ENCODE measurements at regions of chr5 and their contacts with region 1.

Region 1: GRCh38 chr5:38441453-38442246 is 114.8 kb downstream of the LIFR start:
- DNase-seq: peak; percentile 90
- ATAC-seq: peak; percentile 99
- H3K4me3 Mint-ChIP-seq: no peak overlapping the region
- H3K27ac Mint-ChIP-seq: no peak overlapping the region
- H3K4me1 Mint-ChIP-seq: no peaks in the 10 kb centered on the region
- H3K27me3 Mint-ChIP-seq: peaks cover 25% of the 10 kb centered on the region

Region 2: DNA sequence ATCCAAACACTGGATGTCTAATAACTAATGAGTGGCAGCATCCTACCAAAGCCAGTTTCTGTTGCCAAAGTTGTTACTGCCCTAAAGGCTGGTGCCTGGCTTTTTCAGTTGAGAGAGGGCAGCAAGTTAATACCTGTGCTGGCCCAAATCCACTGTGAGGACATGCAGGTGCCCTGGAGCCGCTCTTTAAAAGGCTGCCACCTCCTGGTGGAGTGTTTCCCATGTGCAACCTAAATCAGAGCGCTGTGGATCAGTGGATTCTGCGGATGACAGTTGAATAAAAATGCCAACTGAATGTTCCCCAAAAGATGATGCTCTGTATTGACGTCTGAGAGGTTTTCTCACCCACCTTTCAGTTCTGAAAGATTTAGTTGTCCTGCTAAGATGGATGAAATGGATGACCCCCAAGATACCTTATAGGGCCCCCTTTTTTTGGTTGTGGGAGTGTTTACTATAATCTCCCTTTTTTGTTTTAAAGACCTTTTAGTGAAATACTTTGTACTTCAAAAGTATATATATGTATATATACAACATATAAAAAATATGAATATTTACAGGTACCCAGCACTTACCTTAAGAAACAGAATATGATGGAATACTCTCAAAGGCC is 36.9 kb before region 1 on chr5:
- CTCF ChIA-PET with region 1: no interaction called
- POLR2A ChIA-PET with region 1: no interaction called
- intact Hi-C with region 1: no loop called
- DNase-seq: peak; percentile 29
- ATAC-seq: no peak
- H3K4me3 Mint-ChIP-seq: no peak overlapping the region
- H3K27ac Mint-ChIP-seq: no peak overlapping the region
- H3K4me1 Mint-ChIP-seq: no peaks in the 10 kb centered on the region
- H3K27me3 Mint-ChIP-seq: peaks cover 30% of the 10 kb centered on the region

Region 3: DNA sequence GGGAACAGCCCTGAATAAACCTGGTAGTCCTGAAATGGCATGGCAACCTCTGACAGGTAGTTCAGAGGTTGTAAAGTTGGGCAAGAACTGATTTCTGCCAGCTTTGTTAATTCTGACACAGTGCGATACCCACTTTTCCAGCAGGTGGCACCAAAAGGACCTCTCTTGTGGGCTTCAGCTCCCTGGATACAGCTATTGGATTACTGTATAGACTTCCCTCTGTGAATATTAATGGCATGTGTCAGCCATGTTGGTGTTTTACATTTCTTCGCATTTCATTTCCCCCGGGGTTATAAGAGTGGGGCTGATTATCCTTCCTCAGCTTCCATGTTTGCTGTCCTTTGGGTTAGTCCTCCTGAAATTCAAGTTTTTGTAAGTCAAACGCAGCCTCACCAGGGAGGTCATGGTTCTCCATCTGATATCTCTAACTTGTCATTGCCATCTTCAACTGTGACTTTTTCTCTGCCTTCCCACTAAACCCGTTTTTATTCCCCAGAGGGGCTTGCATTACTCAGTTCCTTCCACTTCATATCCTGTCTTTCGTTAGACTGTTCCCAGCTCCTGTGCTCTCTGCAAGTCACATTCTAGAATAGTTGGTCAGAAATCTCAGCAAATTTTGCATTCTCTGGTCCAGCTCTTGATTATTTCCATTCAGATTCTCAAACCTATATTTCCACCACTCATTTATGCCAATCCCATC is 20.8 kb before region 1 on chr5:
- CTCF ChIA-PET with region 1: interaction called, 26 read pairs
- POLR2A ChIA-PET with region 1: no interaction called
- intact Hi-C with region 1: no loop called
- DNase-seq: peak; percentile 54
- ATAC-seq: peak; percentile 42
- H3K4me3 Mint-ChIP-seq: no peak overlapping the region
- H3K27ac Mint-ChIP-seq: no peak overlapping the region
- H3K4me1 Mint-ChIP-seq: no peaks in the 10 kb centered on the region
- H3K27me3 Mint-ChIP-seq: peaks cover 22% of the 10 kb centered on the region

Region 4: DNA sequence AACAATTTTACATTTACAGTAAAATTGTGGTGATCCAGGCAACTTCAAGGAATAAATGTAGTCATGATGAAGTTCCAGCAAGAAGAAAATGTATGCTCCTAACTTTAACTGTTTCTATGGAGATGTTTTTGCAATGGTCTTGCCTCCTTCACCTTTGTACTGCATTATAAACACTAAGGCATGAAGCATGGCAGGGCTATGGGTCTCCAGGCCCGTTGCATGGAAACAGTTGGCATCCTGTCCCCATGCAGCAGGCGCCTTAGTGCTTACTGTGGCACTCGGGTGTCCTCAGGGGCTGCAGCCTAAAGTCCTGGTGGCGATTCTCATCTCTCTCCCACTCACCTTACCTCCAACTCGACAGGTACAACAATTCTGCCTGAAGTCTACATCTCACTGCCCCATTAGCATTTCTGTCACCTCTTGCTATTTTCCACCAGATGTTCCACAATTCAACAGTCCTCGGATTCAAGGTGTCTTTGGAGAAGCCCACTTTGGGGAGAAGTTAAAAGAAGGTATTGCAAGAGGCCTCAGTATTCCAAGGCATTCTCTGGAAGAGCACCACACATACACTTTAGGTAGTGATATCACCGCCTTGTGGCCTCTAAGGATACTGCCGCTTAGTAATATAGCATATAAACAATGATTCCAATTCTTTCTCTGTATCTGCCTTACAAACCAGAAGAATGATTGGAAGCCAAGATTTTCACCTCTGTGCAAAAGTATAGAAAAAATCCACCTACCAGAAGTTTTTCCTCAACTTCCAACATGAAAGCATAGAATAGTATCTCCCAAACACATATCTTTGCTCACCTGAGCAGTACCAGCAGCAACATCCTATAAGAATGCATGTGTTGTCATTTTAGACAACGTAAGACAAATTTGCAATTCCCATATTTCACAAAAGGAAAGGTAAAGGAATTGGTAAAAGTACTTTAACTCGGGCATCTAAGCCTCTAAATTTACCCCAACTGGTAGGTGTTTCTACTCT is 109.7 kb after region 1 on chr5:
- CTCF ChIA-PET with region 1: interaction called, 7 read pairs
- POLR2A ChIA-PET with region 1: no interaction called
- intact Hi-C with region 1: loop called (anchors 1 kb)
- DNase-seq: peak; percentile 12
- ATAC-seq: peak; percentile 37
- H3K4me3 Mint-ChIP-seq: no peak overlapping the region
- H3K27ac Mint-ChIP-seq: no peak overlapping the region
- H3K4me1 Mint-ChIP-seq: peaks cover 7% of the 10 kb centered on the region
- H3K27me3 Mint-ChIP-seq: peaks cover 35% of the 10 kb centered on the region

Region 5: DNA sequence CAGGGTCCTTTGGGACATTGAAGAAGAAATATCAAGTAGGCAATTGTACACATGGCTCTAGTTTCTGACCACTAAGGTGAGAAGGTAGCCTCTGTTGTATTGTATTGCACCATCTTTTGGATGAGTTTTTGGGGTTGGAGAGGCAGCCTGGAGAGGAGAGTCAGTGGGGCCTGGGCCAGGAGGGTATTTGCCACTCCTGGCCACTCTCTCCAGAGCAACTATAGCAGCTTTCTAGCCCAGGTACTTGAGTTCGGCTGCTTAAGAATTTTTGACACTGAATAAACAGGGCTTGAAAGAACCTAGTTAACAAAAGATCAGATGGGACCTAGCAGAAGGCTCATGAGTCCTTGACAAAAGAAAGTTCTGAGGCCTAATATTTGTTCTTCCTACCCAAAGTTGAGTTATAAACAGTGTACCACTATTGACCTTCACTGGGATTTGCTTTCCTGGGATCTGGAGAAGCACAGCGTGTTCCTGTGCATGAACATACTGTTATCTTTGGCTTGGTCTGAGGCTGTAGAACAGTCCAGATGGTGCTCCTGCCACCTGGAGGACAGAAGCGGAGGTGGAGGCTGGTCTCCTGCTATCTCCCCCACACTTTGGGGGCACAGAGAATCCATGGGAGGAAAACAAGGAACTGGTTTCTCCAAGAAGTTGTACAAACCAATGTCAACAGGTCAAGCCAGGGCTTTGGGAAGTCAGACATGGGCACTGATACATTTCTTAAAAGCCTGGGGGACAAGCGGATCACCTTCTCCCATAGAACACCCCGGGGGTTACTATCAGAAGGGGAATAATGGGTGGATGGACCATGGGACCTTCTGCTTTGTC is 225.2 kb after region 1 on chr5:
- CTCF ChIA-PET with region 1: interaction called, 5 read pairs
- POLR2A ChIA-PET with region 1: no interaction called
- intact Hi-C with region 1: loop called (anchors 1 to 2 kb)
- DNase-seq: peak; percentile 12
- ATAC-seq: no peak
- H3K4me3 Mint-ChIP-seq: no peak overlapping the region
- H3K27ac Mint-ChIP-seq: no peak overlapping the region
- H3K4me1 Mint-ChIP-seq: no peaks in the 10 kb centered on the region
- H3K27me3 Mint-ChIP-seq: peaks cover 18% of the 10 kb centered on the region

Region 6: DNA sequence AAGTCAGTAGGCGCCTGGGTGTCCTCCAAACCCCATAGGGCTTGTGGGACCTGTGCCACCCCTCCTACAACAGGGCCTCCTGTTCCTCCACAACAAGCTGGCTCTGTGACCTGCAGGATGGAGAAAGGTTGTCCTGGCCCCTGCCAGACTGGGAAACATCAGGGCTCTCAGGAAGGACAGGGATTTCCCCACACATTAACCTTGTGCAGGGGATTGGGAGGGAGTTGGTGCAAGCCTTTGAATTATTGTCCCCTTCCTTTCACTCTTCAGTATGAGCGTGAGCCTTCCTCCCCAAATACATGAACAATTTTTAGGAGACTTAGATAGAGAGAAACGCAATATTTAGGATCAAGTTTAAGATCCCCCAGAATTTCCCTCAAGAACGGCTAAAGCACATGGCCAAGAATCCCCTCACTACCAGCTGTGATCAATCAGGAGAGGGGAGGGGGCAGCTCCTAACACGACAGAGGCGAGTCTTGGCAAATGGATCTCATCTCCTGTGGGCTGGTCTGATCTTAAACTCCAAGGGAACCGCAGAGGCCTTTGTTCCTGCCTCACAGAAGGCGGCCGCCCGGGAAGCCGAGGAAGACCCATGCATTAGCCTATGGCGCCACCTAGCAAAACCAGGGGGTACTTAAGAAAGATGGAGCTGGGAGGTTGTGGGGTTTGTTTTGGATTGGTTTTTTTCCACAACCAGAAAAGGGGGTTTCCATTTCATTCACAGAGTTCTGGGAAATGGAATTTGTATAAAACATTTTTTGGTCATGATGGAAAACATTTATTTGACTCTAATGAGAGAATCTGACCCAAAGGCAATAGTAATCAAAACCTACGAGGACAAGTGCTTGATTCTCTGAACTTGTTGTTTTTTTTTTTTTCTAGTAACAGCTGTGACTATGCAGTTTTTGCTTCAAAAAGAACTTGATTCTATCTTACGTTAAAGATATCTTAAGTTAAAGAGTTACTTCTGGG is 368.0 kb after region 1 on chr5:
- CTCF ChIA-PET with region 1: interaction called, 147 read pairs
- POLR2A ChIA-PET with region 1: no interaction called
- intact Hi-C with region 1: loop called (anchors 1 kb)
- DNase-seq: peak; percentile 81
- ATAC-seq: peak; percentile 85
- H3K4me3 Mint-ChIP-seq: no peak overlapping the region
- H3K27ac Mint-ChIP-seq: no peak overlapping the region
- H3K4me1 Mint-ChIP-seq: peaks cover 11% of the 10 kb centered on the region
- H3K27me3 Mint-ChIP-seq: peaks cover 30% of the 10 kb centered on the region

Measured in activated CD4-positive, alpha-beta T cell treated with anti-CD3 and anti-CD28 coated beads for 36 hours (primary cell).